ENCODE measurements at regions of chr1 and their contacts with region 1.

Region 1: GRCh38 chr1:220873868-220874655 is 5.2 kb upstream of the HLX start:
- DNase-seq: peak; percentile 72

Region 2: DNA sequence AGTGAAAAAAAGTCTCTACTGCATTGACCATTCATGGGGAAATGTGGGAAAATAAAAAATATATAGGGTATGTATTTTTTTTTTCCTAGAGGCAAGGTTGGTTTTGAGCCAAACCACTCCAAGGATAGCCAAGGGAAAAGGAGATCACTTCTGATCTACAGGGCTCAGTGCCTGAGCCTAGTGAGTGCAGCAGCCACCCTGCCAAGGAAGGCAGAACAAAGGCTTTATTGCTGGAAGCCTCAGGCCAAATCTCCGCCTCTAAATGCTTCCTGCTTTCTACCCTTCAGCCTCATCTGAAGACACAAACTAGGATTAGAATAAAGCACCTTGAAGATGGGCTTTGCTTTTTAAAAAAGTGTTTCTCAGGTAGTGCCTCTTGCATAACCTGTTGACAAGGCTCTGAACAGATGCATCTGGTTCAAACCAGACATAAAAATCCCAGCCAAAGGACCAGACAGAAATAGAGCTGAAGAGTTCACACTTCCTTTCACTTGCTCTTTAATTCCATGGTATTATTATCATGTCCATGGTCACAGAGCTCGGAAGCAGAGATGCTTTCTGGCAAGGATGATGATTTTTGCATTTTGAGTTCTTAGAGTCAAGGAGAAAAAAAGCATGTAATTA is 173.4 kb before region 1 on chr1:
- intact Hi-C with region 1: no loop called
- DNase-seq: no peak

Region 3: GRCh38 chr1:220810179-220810653 is 63.8 kb before region 1 on chr1:
- intact Hi-C with region 1: loop called (anchors 2 kb)
- DNase-seq: peak; percentile 92

Region 4: DNA sequence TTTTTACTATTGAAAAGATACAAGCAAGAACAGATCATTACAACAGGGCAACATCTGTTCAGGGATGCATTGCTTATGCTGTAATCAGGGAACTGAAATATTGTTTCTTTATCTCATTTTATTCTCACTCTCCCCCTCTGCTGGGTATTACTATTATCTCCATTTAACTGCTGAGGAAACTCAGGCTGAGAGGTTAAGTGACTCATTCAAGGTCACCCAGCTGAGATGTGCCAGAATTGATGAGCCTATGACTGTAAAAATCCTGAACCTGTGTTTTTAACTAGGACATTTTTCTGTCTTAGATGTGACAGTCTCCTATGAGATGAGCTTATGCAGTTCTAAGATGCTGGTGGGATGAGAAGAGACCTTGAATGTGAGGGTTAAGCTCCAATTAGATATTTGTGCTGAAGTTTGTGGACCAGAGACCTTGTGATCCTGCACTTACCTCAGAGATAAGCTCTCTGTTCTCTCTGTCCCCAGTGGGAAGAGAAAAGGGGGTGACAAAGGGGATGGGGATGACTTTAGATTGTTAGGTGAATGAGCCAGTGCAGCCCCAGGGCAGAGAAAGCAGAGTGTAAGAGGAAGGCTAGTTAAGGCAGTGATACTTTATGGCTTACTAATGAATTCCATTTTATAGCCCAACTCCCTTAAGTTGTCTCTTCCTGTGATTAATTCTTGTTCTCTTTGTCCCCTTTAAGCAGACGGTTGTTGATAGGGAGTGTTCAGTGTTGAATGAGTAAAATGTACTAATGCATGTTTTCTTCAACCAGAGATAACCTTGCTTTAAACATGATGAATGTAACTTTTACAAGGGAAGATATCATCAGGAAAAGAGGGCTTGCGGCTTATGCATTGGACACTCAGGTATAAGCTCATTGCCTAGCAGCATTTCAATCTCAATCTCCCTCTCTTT is 116.6 kb after region 1 on chr1:
- intact Hi-C with region 1: no loop called
- DNase-seq: no peak

Region 5: GRCh38 chr1:221045842-221046831 is 172.1 kb after region 1 on chr1:
- intact Hi-C with region 1: no loop called
- DNase-seq: no peak